ENCODE measurements at regions of chr1 and their contacts with region 1.

Region 1: DNA sequence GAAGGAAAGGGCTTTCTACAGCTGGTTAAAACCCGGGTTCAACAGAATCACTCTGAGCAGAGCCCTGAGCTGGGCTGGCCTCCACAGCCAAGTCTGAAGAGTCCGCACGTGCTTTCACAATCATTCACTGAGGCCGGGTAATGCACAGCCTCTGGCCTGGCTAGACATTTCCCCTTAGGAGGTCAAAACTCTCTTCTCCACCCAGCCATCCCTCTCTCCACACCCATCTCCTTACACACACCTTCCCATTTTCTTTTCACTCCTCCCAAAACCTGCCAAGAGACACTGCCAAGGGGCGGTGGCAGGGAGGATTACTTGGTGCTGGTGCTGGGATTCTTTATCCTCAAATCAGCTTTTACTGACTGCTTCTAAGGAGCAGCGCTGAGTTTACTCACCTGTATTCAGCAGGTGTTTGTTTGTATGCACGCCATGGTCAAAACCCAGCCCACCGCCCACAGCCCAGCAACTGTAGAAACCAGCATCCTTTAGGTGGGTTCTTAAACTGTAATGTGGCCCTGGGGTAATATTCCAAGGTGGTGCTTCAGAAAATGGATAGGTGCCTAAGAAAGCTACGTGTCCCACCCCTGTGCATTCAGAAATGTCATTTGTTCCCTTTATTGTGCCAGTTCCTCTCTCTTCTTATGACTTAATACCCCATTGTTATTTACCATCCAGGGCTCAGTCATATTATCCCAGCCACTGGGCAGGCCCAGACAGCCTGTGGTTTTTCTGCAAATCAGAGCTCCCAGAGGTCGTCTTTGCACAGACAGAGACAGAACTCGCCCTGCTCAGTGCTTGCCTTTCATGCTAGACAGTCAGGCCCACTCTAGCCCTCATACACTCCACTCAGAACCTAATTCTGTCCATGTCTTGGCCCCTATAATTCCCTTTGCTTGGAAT is 80.2 kb downstream of the ADSS2 start:
- DNase-seq: peak; percentile 89
- H3K4me3 ChIP-seq: no peak overlapping the region
- H3K27ac ChIP-seq: no peak overlapping the region
- H3K4me1 ChIP-seq: peaks cover 17% of the 10 kb centered on the region
- H3K27me3 ChIP-seq: no peaks in the 10 kb centered on the region
- CTCF ChIP-seq: no peak

Region 2: GRCh38 chr1:243409284-243409683 is 962.2 kb before region 1 on chr1:
- CTCF ChIA-PET with region 1: interaction called, 16 read pairs
- dilution Hi-C with region 1: no loop called
- in situ Hi-C with region 1: no loop called
- intact Hi-C with region 1: no loop called
- DNase-seq: no peak
- H3K4me3 ChIP-seq: no peak overlapping the region
- H3K27ac ChIP-seq: no peak overlapping the region
- H3K4me1 ChIP-seq: no peaks in the 10 kb centered on the region
- H3K27me3 ChIP-seq: no peaks in the 10 kb centered on the region
- CTCF ChIP-seq: peak in 1 of 2 donors; percentile 4

Measured in mammary epithelial cell (primary cell).